Ascending aorta (tissue), 2 donors: ENCODE measurements at regions of chr3 and their contacts with region 1.

Region 1: DNA sequence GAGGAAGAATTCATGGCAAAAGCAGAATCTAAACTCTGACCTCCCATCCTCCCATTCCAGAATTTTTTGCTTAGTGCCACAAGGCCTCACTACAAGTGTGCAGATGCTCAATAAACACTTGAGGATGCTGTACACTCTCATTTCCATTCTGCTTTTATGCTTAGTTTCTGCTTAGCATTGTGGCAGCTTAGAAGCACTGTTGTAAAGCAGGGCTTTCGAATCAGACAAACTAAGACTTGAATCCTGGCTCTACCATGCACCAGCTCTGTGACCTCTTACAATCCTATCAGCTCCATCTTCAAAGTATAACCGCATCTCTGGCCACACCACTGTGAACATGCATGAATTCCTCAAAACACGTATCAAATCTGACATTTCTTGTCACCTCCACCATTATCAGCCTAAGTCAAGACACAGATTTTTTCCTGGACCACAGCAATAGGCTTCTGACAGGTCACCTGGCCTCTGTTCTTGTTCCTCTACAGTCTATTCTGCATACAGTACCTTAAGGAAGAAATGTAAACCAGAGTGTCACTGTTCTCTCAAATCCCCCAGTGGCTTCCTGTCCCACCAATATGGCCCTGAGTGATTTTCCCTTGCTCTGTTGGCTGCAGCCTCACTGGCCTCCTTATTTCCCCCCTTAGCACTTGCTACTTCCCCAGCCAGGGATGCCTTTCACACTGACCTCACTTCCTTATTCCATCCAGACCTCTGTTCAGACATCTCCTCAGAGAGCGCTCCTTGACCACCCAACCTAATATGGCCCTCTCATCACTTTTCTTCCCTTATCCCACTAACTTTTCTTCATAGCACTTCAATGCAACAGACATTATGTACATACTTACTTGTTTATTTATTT is 8.1 kb upstream of the PHC3 start:
- DNase-seq: no peak
- H3K4me3 ChIP-seq: no peak overlapping the region
- H3K27ac ChIP-seq: no peak overlapping the region
- H3K4me1 ChIP-seq: no peaks in the 10 kb centered on the region
- H3K27me3 ChIP-seq: no peaks in the 10 kb centered on the region
- CTCF ChIP-seq: no peak

Region 2: DNA sequence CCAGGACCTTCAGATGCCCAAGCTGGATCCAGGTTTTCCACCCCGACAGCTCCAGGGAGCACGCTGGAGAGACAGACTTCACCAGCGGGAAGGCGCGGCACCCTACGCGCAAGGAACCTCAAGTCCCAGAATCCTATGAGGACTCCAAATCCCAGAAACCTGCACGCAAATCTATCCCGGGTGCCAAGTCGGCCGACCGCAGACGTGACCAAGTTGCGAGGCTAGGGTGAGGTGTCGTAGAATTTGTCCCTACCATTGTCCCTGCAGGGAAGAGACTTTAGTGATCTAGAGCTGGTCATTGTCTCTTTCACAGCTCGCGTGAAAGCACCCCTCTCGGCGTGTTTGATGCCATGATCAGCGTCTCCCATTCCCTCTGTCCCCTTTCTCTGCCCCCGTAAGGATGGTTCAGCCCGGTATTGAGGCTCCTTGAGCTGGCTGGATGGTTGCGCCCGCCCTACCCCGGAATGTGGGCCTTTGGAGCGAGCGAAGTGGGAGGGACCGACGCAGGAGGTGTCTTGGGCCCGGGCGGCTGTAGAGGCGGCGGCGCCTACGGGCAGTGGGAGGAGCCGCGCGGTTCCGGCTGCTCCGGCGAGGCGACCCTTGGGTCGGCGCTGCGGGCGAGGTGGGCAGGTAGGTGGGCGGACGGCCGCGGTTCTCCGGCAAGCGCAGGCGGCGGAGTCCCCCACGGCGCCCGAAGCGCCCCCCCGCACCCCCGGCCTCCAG is 32.5 kb after region 1 on chr3 and contains the start of gene PRKCI:
- intact Hi-C with region 1: loop called (anchors 2 kb)
- DNase-seq: peak; percentile 80 to 97
- H3K4me3 ChIP-seq: peak within 1 kb of the TSS; percentile 96 to 97
- H3K27ac ChIP-seq: peak within 1 kb of the TSS; percentile 94 to 96
- H3K4me1 ChIP-seq: peaks cover 0 to 17% of the 10 kb centered on the region in 2 donors
- H3K27me3 ChIP-seq: no peaks in the 10 kb centered on the region
- CTCF ChIP-seq: no peak
- total RNA-seq, gene PRKCI: 20.3 TPM